A673 (cell line): ENCODE measurements at regions of chr14 and their contacts with region 1.

Region 1: DNA sequence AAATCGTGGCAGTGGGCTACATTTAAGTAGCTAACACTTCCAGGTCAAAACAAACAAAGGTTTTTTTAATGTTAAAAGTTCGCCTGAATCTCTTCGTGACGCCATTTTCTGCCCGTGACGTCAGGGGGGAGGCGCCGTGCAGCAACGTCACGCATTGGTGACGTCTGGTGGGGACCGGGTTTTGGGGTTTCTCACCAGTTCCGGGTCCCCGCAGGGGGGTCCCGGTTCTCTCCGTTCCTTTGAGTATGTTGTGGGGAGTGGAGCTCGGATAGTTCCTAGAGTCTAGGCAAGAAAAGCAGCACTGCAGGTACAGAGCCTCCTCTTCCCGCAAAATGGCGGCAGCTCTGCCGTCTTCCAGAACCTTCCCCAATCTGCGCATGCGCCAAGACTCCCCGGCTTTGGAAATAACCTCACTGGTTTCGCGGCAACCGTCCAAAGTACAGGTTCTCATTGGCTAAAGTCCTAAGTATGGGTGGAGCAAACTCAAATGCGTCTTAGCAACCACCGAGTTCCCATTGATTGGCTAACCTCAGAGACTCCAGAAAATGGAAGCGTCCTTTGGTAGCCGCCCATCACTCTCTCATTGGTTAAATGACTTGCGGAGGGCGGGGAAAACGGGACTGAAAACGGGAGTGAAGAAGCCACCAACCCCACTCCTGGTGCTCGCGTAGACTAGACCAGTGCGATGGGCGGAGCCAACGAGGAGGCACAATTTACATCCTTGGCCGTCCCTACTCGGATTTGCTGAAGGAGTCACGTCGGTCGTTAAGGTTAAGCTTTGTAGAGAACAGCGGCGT is at the start of gene RBM23:
- DNase-seq: peak; percentile 100
- H3K4me3 ChIP-seq: peak within 1 kb of the TSS; percentile 78
- H3K27ac ChIP-seq: peak within 1 kb of the TSS; percentile 97
- H3K4me1 ChIP-seq: peaks cover 26% of the 10 kb centered on the region
- H3K27me3 ChIP-seq: no peaks in the 10 kb centered on the region
- CTCF ChIP-seq: no peak
- total RNA-seq, gene RBM23: 105 and 118 TPM in 2 replicates

Region 2: DNA sequence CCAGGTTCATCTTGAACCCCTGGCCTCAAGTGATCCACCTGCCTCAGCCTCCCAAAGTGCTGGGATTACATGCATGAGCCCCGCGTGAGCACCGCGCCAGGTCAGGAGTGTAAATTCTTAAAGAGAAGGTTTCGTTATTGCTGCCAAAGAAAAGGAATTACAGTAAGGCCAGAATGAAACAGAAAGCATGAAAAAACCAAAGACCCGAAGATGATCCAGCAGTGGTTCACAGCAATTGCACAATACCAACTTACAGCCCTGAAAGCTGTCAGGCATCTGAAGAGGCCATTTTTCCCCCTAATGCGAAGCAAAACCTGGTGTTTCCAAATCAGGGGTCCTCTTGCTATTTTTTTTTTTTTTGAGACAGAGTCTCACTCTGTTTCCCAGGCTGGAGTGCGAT is 10.4 kb before region 1 on chr14:
- CTCF ChIA-PET with region 1: no interaction called
- POLR2A ChIA-PET with region 1: interaction called, 14 read pairs
- intact Hi-C with region 1: no loop called
- DNase-seq: no peak
- H3K4me3 ChIP-seq: no peak overlapping the region
- H3K27ac ChIP-seq: no peak overlapping the region
- H3K4me1 ChIP-seq: no peaks in the 10 kb centered on the region
- H3K27me3 ChIP-seq: no peaks in the 10 kb centered on the region
- CTCF ChIP-seq: no peak